ENCODE measurements at regions of chr18 and their contacts with region 1.

Region 1: GRCh38 chr18:62714671-62715435 is 488 bp upstream of the PHLPP1 start:
- DNase-seq: peak; percentile 99
- ATAC-seq: peak; percentile 97 to 98

Region 2: GRCh38 chr18:62584241-62585120 is 130.4 kb before region 1 on chr18:
- intact Hi-C with region 1: loop called in 1 of 2 experiments (anchors 5 kb)
- DNase-seq: peak; percentile 85
- ATAC-seq: peak; percentile 88 to 93

Region 3: DNA sequence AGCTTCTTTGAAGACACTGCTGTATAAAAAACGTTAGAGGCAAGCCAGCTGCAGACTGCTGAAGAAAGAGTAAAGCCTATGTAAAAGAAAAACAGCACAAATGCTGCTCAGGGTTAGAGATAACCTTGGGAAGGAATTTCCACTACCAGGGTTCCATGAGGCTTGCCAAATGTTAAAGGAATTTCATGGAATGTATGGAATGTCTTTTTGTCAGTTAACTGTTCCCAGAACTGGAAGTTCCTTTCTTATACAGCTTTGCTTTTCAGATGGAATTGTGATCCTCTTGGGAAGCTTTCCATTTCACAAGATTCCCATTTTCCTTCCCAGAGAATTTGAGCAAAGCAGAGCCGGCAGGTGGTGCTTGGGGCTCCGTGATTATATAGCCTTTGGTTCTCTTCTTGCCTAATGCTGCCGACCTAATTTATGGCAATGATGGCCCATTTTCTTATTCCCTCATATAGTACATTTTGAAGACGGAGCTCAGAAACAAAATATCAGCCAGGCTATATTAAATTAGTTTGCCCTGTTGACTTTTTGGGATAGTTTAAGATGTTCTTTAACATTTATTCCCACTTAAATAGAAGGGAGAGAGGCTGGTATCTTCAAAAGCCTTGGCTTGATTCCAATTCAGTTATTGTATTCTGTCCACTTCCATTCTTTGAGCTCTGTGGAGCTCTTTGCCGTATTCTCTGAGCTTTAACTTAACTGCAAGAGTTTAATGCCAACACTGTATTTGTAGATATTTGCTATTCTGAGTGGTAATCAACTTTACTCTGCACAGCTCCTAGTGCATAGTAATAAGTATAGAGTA is 162.8 kb after region 1 on chr18:
- intact Hi-C with region 1: loop called in 1 of 2 experiments (anchors 10 kb)
- DNase-seq: no peak
- ATAC-seq: peak; percentile 8 to 20

Region 4: GRCh38 chr18:62982600-62983251 is 267.9 kb after region 1 on chr18:
- intact Hi-C with region 1: loop called (anchors 2 to 10 kb)
- DNase-seq: peak; percentile 54
- ATAC-seq: peak; percentile 73 to 80